ENCODE measurements at regions of chr1 and their contacts with region 1.

Region 1: DNA sequence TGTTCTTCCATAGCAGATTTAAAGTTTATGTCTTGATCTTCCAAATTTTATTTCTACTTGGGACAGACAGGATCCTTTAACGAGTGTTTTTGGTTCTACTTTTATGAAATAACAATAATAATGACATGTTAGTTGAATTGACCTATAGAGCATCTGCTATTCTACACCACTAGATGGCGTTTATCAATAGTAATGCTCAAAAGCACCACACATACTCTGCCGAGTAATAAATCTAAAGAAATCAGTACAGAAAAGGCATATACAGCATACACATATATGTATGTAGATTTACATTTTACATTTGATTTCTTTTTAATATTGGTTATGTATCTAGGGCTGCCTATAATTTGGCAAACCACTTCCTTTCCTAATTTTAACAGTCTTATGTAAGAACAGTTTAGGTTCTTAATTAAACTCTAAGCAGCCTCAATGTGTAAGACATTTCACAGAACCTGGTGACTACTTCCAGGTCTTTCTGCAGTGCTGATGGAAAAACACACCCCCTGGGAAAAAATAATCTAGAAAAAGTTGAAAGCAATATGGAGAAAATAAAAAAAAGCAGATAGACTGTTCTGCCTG is 5.9 kb upstream of the SIPA1L2 start:
- DNase-seq: no peak
- H3K4me3 Mint-ChIP-seq: no peak overlapping the region
- H3K27ac Mint-ChIP-seq: no peak overlapping the region
- H3K4me1 Mint-ChIP-seq: peaks cover 3% of the 10 kb centered on the region
- H3K27me3 Mint-ChIP-seq: peaks cover 2% of the 10 kb centered on the region

Region 2: DNA sequence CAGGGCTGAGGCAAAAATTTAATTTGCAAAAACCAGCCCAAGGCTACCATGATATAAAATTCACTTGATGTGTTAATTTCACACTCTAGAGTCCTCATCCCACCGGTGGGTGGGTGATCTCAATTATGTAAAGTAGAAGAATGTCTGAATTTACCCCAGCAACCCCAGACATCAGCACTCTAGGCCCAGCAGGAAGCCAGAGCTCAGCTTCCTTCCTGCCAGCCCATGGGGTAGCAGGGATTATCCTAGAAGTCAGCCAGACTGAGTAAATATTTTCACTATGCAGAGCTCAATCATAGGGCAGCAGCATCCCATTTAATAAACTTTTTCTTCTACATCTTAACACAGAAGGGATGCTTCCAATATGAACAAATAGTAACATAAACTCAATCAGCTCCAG is 76.9 kb before region 1 on chr1:
- CTCF ChIA-PET with region 1: no interaction called
- intact Hi-C with region 1: no loop called
- DNase-seq: no peak
- H3K4me3 Mint-ChIP-seq: no peak overlapping the region
- H3K27ac Mint-ChIP-seq: no peak overlapping the region
- H3K4me1 Mint-ChIP-seq: peaks cover 7% of the 10 kb centered on the region
- H3K27me3 Mint-ChIP-seq: no peaks in the 10 kb centered on the region

Region 3: GRCh38 chr1:232793944-232794343 is 158.1 kb after region 1 on chr1:
- CTCF ChIA-PET with region 1: interaction called, 5 read pairs
- intact Hi-C with region 1: loop called (anchors 1 kb)
- DNase-seq: peak; percentile 55
- H3K4me3 Mint-ChIP-seq: no peak overlapping the region
- H3K27ac Mint-ChIP-seq: no peak overlapping the region
- H3K4me1 Mint-ChIP-seq: peaks cover 15% of the 10 kb centered on the region
- H3K27me3 Mint-ChIP-seq: peaks cover 2% of the 10 kb centered on the region

Region 4: DNA sequence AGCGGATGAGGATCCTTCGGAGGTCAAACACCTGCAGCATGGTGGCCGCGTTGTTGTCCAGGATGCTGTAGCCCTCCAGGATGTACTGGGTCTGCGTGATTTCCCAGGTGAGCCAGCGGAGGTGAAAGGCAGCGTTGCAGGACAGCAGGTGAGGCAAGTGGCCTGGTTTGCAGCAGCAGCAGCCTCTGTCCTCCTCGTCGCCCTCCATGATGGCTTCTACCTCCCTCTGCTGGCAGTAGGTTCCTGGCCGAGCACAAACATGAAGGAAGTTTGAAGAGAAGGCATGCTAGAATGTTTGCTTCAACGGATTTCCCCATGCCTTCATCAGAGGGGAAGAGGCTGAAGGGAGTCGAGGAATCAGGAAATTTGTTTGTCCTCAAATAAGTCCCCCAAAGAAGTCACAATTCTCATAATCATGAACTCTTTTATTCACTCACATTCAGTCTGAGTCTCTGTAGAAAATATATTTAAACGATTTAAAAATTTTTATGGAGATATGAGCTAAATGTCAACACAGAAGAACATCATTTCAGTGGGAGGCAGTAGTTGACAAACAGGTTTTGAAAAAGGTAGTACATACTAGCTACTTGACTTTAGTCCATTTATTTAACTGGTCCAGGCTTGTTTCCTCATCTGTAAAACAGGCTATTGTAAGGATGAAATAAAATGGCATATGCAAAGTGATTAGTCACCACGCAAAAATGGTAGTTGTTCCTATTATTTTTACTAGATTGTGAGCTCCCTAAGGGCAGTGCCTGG is 389.5 kb after region 1 on chr1:
- CTCF ChIA-PET with region 1: interaction called, 3 read pairs
- intact Hi-C with region 1: loop called (anchors 1 kb)
- DNase-seq: peak; percentile 32
- H3K4me3 Mint-ChIP-seq: no peak overlapping the region
- H3K27ac Mint-ChIP-seq: no peak overlapping the region
- H3K4me1 Mint-ChIP-seq: no peaks in the 10 kb centered on the region
- H3K27me3 Mint-ChIP-seq: no peaks in the 10 kb centered on the region

Region 5: DNA sequence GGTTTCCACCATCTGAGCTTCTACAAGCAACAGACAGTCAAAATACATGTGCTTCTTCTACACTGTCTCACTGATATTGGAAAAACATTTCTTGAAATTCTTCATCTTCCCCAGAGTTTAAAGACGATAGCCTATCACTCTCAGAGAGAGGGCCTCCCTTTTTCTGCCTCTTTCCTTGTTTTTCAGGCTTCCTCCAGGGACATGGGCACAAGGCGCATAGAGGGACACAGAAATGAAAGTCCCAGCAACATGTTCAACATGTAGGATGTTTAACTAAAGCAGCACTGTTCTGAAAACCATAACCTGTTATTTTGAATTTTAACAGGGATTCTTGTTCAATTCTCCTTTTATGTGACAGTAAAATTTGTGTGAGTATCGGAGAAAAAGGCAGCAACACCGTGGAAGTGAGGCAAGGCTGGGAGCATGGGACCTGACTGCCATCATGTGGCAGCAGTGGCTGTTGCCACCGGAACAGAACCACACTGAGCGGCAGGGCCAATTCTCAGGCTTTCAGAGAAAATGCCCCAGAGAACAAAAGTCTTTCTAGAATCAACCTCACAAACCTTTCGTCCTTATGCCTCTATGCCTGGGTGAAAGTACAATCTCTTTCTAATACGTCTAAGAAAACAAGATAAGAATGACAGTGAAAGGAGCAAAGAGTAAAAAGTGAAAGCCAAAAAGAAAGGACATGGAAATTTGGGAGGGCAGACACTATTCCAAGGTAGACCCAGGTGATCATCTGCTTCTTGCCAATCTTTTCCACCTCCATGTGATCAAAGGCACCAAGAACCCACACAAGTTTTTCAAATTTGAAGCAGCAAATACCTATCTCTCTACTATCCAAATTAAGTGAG is 605.2 kb after region 1 on chr1:
- CTCF ChIA-PET with region 1: interaction called, 3 read pairs
- intact Hi-C with region 1: loop called (anchors 1 kb)
- DNase-seq: peak; percentile 28
- H3K4me3 Mint-ChIP-seq: no peak overlapping the region
- H3K27ac Mint-ChIP-seq: no peak overlapping the region
- H3K4me1 Mint-ChIP-seq: no peaks in the 10 kb centered on the region
- H3K27me3 Mint-ChIP-seq: no peaks in the 10 kb centered on the region

Measured in activated naive CD4-positive, alpha-beta T cell treated with anti-CD3 and anti-CD28 coated beads for 36 hours (primary cell).